MCF 10A (cell line): ENCODE measurements at regions of chr4 and their contacts with region 1.

Region 1: GRCh38 chr4:88352062-88352740 is 26.5 kb upstream of the HERC6 start:
- DNase-seq: peak; percentile 46
- H3K4me3 Mint-ChIP-seq: no peak overlapping the region
- H3K27ac Mint-ChIP-seq: peak overlapping the region; percentile 37
- H3K4me1 Mint-ChIP-seq: peaks cover 9% of the 10 kb centered on the region
- H3K27me3 Mint-ChIP-seq: no peaks in the 10 kb centered on the region
- CTCF ChIP-seq: no peak

Region 2: GRCh38 chr4:88341227-88342192 is 10.7 kb before region 1 on chr4:
- CTCF ChIA-PET with region 1: interaction called, 13 read pairs
- POLR2A ChIA-PET with region 1: interaction called, 10 read pairs
- intact Hi-C with region 1: no loop called
- DNase-seq: peak; percentile 59
- H3K4me3 Mint-ChIP-seq: no peak overlapping the region
- H3K27ac Mint-ChIP-seq: no peak overlapping the region
- H3K4me1 Mint-ChIP-seq: peaks cover 6% of the 10 kb centered on the region
- H3K27me3 Mint-ChIP-seq: no peaks in the 10 kb centered on the region
- CTCF ChIP-seq: no peak

Region 3: DNA sequence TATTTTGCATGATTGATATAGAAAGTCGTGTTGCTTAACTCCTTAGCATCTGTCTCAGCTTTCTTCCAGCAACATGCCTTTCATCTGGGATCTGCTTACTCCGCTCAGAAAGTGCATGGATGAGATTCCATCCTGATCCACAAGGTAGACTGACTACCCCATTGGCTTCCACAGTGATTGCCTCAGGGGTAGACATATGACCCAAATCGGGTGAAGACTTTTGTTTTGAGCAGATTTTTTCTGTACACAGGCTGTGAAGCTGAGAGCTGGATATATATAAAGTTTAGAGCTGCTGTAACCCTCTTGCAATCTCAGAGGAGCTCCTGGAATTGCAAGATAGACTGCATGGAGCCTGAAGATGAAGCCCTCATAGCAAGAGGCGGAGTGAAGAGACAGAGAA is 17.7 kb after region 1 on chr4:
- CTCF ChIA-PET with region 1: interaction called, 20 read pairs
- POLR2A ChIA-PET with region 1: interaction called, 4 read pairs
- intact Hi-C with region 1: no loop called
- DNase-seq: no peak
- H3K4me3 Mint-ChIP-seq: no peak overlapping the region
- H3K27ac Mint-ChIP-seq: no peak overlapping the region
- H3K4me1 Mint-ChIP-seq: no peaks in the 10 kb centered on the region
- H3K27me3 Mint-ChIP-seq: no peaks in the 10 kb centered on the region
- CTCF ChIP-seq: no peak

Region 4: GRCh38 chr4:88419874-88420273 is 67.7 kb after region 1 on chr4:
- CTCF ChIA-PET with region 1: no interaction called
- POLR2A ChIA-PET with region 1: no interaction called
- intact Hi-C with region 1: no loop called
- DNase-seq: no peak
- H3K4me3 Mint-ChIP-seq: no peak overlapping the region
- H3K27ac Mint-ChIP-seq: no peak overlapping the region
- H3K4me1 Mint-ChIP-seq: no peaks in the 10 kb centered on the region
- H3K27me3 Mint-ChIP-seq: no peaks in the 10 kb centered on the region
- CTCF ChIP-seq: no peak